Activated CD4-positive, alpha-beta T cell treated with anti-CD3 and anti-CD28 coated beads, Interleukin-2, amount 10 ng/mL, durations not matched to agents 24 days and 14 days (primary cell): ENCODE measurements at regions of chr2 and their contacts with region 1.

Region 1: DNA sequence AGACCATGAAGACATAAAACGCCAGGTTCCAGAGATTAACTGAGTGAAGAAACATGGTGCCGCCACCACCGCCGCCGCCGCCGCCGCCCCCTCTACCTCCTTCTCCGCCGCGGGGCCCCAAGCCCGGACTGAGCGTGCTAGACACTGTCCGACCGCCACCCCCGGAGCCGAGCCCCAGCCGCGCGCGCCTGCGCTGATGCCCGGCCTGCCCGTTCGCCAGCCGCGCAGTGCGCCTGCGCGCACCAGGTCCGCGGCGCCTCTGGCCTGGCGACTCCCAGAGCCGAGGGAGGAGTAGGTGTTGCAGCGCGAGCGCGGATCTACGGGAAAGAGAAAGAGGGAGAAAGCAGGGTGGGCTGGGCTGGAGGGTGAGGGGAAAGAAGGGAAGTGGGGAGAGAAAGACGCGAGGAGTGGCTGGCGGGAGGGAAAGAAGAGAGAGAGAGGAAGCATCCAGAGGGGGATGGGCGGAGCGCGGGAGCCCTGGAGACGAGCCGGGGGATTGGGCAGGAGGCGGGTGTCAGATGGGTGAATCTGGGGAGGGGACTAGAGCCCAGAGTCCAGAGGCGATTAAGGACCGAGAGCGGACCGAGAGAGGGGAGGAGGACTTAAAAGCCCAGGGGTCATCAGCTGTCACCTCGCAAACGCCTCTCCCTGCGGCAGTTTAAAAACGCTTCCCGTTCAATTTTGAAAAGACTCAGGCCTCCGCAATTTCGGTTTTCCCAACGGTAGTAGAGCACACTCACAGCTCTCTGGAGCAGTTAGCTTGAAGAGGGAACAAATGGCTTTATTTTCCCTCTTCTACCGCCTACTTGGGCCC is at the start of gene PGAP1:
- DNase-seq: peak; percentile 97
- H3K4me3 Mint-ChIP-seq: peak within 1 kb of the TSS; percentile 100
- H3K27ac Mint-ChIP-seq: peak within 1 kb of the TSS; percentile 100
- H3K4me1 Mint-ChIP-seq: peaks cover 46% of the 10 kb centered on the region
- H3K27me3 Mint-ChIP-seq: no peaks in the 10 kb centered on the region
- total RNA-seq, gene PGAP1: 22.6 and 27.1 TPM in 2 replicates

Region 2: GRCh38 chr2:196783431-196784094 is 143.2 kb before region 1 on chr2:
- intact Hi-C with region 1: loop called (anchors 5 kb)
- DNase-seq: no peak
- H3K4me3 Mint-ChIP-seq: peak overlapping the region; percentile 8
- H3K27ac Mint-ChIP-seq: peak overlapping the region; percentile 73
- H3K4me1 Mint-ChIP-seq: peaks cover 12% of the 10 kb centered on the region
- H3K27me3 Mint-ChIP-seq: no peaks in the 10 kb centered on the region

Region 3: DNA sequence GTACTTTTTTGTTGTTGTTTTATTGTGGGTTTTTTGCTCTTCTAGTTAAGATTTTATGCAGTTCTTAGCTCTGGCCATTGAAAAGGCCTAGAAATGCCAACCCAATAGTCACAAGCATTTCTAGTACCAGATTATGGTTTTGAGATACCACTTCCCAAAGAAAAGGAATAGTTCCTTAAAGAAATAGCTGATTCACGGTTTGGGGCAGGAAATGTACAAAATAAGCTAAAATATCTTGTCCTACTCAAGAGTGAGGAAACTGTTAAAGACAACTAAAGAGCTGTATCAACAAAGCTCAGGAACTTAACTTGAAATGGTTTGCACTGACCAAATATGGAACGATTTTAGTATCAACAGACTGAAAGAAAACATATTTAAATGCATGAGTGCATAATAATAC is 35.6 kb before region 1 on chr2:
- intact Hi-C with region 1: no loop called
- DNase-seq: no peak
- H3K4me3 Mint-ChIP-seq: no peak overlapping the region
- H3K27ac Mint-ChIP-seq: no peak overlapping the region
- H3K4me1 Mint-ChIP-seq: peaks cover 11% of the 10 kb centered on the region
- H3K27me3 Mint-ChIP-seq: no peaks in the 10 kb centered on the region

Region 4: GRCh38 chr2:196915507-196916189 is 11.1 kb before region 1 on chr2:
- intact Hi-C with region 1: loop called (anchors 1 kb)
- DNase-seq: peak; percentile 72
- H3K4me3 Mint-ChIP-seq: peak overlapping the region; percentile 78
- H3K27ac Mint-ChIP-seq: peak overlapping the region; percentile 95
- H3K4me1 Mint-ChIP-seq: peaks cover 41% of the 10 kb centered on the region
- H3K27me3 Mint-ChIP-seq: no peaks in the 10 kb centered on the region

Region 5: DNA sequence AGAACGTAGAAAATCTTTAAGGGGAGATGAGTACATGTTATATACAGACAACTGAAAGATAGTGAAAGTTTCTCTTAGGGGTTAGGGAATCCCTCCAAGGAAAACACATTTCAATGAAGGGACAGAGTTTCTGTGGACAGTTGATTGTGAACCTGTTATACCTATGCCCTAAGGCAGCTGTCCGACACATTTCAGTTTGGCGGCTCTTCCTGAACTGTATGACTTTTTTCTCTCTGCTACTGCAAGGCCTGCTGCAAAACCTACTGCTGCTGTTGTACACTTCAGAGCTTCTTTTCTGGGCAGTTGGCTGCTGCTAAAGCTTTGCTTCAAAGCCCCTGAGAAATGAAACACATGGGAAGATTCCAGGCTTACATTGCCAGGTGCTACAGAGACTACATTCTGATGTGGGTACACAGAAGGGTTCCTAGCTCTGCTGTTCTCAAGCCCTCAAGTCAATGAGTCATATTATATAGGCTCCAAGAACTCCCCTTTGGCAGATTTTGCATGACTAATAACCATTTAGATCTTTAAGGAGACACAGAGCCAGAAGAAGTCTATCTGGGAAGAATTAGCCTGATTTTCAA is 12.5 kb after region 1 on chr2:
- intact Hi-C with region 1: no loop called
- DNase-seq: no peak
- H3K4me3 Mint-ChIP-seq: no peak overlapping the region
- H3K27ac Mint-ChIP-seq: no peak overlapping the region
- H3K4me1 Mint-ChIP-seq: peaks cover 14% of the 10 kb centered on the region
- H3K27me3 Mint-ChIP-seq: no peaks in the 10 kb centered on the region

Region 6: DNA sequence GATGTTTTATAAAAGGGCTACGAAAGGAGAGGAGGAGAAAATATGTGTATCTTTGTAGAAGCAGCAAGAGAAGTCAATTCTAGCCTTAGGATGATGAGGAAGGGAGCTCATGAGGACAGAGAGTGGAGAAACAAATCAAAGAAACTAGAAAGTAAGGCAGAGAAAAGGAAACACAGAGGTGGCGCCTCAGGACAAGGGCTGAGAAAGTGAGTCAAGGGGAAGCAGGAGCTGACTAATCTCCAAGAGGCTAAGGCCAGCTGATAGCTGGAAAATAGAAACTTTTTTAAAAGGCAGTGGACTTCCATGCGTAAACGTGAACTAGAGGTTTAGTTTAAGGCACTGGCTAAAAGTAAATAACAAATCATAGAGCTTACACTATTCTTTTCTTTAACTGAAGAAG is 210.5 kb after region 1 on chr2:
- intact Hi-C with region 1: loop called (anchors 5 kb)
- DNase-seq: no peak
- H3K4me3 Mint-ChIP-seq: peak overlapping the region; percentile 1
- H3K27ac Mint-ChIP-seq: peak overlapping the region; percentile 73
- H3K4me1 Mint-ChIP-seq: peaks cover 65% of the 10 kb centered on the region
- H3K27me3 Mint-ChIP-seq: no peaks in the 10 kb centered on the region

Region 7: DNA sequence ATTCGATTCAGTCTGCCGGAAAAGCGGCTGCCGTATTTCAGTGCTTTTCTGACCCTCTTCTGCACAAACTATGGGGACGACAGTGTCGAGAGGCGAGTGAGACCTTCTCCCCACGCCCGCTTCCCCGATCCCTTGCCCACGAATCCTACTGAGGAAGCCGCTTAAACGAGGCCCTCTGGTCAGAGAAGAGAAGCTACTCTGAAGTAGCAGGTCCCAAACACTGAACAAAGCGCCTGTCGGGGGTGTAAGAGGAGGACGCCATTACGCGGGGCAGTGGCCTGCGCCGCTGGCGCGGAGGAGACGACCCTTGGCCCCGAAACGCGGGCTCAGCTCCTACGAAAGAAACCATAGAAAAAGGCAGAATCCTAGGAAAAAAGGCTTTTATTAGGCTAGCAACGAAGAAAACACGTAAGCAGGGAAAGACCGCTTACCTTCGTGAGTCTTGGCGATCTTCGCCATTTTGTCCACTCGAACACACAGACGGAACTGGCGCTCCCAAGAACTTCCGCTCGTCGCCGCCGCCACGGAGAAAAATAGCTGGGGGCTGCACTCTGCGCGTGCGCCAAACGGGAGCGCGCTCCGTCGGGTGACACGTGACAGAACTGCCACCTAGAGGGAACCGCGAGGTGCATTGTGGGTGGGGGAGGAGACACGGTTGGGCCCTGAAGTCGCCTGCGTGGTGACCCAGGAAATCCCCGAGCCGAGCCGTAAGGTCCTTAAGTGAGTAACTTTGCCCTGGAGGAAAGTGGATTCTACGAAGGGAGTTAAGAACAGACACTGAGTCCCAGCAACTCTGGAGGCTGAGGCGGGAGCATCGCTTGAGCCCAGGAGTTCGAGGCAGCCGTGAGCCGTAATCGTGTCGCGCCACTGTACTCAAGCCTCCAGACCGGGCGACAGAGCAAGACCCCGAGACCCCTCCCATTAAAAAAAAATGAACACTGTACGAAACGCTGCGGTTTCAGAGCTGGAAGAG is 508.1 kb after region 1 on chr2 and contains the start of gene SF3B1:
- intact Hi-C with region 1: loop called (anchors 10 kb)
- DNase-seq: peak; percentile 100
- H3K4me3 Mint-ChIP-seq: peak within 1 kb of the TSS; percentile 84
- H3K27ac Mint-ChIP-seq: peak within 1 kb of the TSS; percentile 100
- H3K4me1 Mint-ChIP-seq: peaks cover 45% of the 10 kb centered on the region
- H3K27me3 Mint-ChIP-seq: peaks cover 2% of the 10 kb centered on the region
- total RNA-seq, gene SF3B1: 259 and 278 TPM in 2 replicates